Activated T-helper 2 cell treated with anti-CD3 and anti-CD28 coated beads, Interferon-gamma antibody, Interleukin-2, Interleukin-4, amounts not matched to agents 10 μg/mL and 5 μg/mL and 100 μg/mL, durations not matched to agents 14 hours and 24 hours and 36 hours (primary cell): ENCODE measurements at regions of chr6 and their contacts with region 1.

Region 1: DNA sequence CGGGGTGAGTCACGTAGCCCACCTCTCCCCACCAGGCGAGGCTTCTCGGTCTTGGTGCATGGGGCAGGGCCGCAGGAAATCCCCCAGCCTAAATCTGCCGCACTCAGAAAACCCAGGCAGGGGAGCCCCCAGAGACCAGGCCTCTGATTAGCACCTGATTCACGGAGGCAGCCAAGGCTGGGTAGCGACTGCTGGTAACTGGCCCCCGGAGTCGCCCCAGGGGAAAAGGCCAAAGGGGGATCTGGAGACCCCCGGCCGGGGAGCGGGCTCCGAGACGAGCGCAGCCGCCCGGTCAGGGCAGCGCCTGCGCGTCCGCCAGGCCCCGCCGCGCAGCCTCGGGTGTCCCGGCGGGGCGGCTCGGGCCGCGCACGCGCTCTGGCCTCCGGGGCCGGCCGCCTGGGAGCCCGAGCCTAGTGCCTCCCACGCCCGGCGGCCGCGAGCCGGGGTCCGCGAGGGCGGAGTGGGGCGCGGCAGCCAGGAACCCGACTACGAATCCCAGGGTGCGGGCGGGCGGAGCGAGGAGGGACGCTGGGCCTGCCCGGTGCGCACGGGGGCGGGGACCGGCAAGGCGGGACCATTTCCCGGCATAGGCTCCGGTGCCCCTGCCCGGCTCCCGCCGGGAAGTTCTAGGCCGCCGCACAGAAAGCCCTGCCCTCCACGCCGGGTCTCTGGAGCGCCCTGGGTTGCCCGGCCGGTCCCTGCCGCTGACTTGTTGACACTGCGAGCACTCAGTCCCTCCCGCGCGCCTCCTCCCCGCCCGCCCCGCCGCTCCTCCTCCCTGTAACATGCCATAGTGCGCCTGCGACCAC is at the start of gene DUSP22:
- DNase-seq: peak; percentile 78
- H3K4me3 Mint-ChIP-seq: peak within 1 kb of the TSS; percentile 91
- H3K27ac Mint-ChIP-seq: peak within 1 kb of the TSS; percentile 95
- H3K4me1 Mint-ChIP-seq: peaks cover 45% of the 10 kb centered on the region
- H3K27me3 Mint-ChIP-seq: no peaks in the 10 kb centered on the region
- total RNA-seq, gene DUSP22: 27.5 and 28.6 TPM in 2 replicates

Region 2: GRCh38 chr6:188821-189655 is 102.9 kb before region 1 on chr6:
- intact Hi-C with region 1: loop called (anchors 1 kb)
- DNase-seq: peak; percentile 77
- H3K4me3 Mint-ChIP-seq: peak overlapping the region; percentile 20
- H3K27ac Mint-ChIP-seq: peak overlapping the region; percentile 71
- H3K4me1 Mint-ChIP-seq: peaks cover 46% of the 10 kb centered on the region
- H3K27me3 Mint-ChIP-seq: no peaks in the 10 kb centered on the region

Region 3: GRCh38 chr6:251920-252319 is 40.0 kb before region 1 on chr6:
- intact Hi-C with region 1: loop called (anchors 2 kb)
- DNase-seq: no peak
- H3K4me3 Mint-ChIP-seq: no peak overlapping the region
- H3K27ac Mint-ChIP-seq: peak overlapping the region; percentile 56
- H3K4me1 Mint-ChIP-seq: peaks cover 34% of the 10 kb centered on the region
- H3K27me3 Mint-ChIP-seq: peaks cover 2% of the 10 kb centered on the region

Region 4: GRCh38 chr6:336159-337019 is 44.5 kb after region 1 on chr6:
- intact Hi-C with region 1: loop called (anchors 1 kb)
- DNase-seq: peak; percentile 23
- H3K4me3 Mint-ChIP-seq: peak overlapping the region; percentile 35
- H3K27ac Mint-ChIP-seq: peak overlapping the region; percentile 74
- H3K4me1 Mint-ChIP-seq: peaks cover 55% of the 10 kb centered on the region
- H3K27me3 Mint-ChIP-seq: no peaks in the 10 kb centered on the region

Region 5: DNA sequence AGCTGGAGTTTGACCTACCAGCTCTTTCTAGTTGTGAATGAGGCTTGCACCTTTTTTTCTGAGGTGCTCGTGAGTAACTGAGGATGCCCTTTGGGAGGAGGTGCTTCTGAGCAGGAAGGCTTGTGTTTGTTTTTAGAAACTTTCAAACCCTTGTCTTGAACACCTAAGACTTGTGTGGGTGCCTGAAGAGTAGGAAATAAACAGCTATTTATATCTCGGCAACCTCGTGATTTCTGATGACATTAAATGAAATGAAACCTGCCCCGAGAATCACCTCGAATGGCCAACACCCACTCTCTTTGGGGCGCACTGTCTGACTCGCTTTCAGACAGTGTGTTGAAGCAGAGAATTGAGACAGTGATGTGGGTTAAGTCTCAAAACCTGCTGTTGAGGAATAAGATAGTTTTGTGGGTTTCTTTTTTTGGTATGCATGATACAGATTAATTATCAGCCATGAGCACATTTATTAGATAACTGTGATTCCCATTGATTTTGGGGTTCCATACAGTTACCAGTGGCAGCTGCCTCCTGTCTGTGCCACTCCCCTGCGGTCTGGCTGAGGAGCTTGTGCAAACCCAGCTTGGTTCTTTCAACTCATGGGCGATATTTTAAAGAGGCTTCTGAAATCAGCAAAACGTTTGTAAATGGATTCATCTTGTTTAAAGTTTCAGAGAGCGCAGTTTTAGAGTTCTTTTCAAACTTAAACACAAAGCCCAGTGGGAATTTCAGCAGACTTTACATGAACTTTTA is 108.1 kb after region 1 on chr6:
- intact Hi-C with region 1: loop called (anchors 2 kb)
- DNase-seq: peak; percentile 57
- H3K4me3 Mint-ChIP-seq: peak overlapping the region; percentile 72
- H3K27ac Mint-ChIP-seq: peak overlapping the region; percentile 78
- H3K4me1 Mint-ChIP-seq: peaks cover 86% of the 10 kb centered on the region
- H3K27me3 Mint-ChIP-seq: no peaks in the 10 kb centered on the region

Region 6: GRCh38 chr6:683742-684440 is 392.0 kb after region 1 on chr6:
- intact Hi-C with region 1: loop called (anchors 5 kb)
- DNase-seq: no peak
- H3K4me3 Mint-ChIP-seq: peak overlapping the region; percentile 11
- H3K27ac Mint-ChIP-seq: peak overlapping the region; percentile 15
- H3K4me1 Mint-ChIP-seq: peaks cover 31% of the 10 kb centered on the region
- H3K27me3 Mint-ChIP-seq: no peaks in the 10 kb centered on the region